ENCODE measurements at regions of chr12 and their contacts with region 1.

Region 1: DNA sequence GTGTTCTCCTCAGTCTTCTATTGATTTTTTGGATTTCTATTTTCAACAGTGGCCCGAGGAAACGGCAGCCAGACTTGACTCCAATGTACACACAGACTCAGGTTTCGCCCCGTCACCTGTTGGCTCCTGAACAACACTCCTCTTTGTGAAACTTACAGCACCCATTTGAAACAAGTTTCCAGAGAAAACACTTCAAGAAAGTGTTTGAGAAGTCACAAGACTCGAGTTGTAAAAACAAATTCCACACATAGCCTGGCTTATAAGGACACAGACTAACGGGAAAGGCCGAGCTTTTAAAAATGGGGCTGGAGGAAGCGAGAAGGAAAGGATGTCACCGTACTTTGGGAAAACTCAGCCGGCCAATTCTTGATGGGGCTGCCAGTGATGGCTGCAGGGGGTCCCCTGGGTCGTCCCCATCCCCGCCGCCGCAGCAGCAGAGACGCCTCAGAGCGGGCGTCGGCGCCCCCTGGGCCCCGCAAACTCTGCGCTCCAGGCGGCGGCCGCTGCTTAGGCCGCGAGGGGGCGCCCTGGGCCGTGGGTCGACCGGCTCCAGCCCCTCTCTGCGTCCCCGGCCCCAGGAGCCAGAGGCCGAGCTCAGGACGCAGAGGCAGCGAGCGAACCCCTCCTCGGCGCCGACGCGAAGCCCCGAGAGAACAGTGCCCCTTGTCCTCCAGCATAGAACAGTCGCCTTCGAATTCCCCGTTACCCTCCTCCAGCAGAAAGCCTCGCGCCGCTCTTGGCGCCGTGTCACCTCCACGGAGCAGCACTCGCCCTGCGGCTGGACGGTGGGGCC is 106.9 kb downstream of the PRICKLE1 start:
- DNase-seq: peak; percentile 81 to 94
- ATAC-seq: peak; percentile 94
- H3K4me3 ChIP-seq: peak overlapping the region; percentile 77 to 95
- H3K27ac ChIP-seq: peak overlapping the region in 1 of 2 donors; percentile 77
- H3K4me1 ChIP-seq: no peaks in the 10 kb centered on the region
- H3K27me3 ChIP-seq: no peaks in the 10 kb centered on the region

Region 2: DNA sequence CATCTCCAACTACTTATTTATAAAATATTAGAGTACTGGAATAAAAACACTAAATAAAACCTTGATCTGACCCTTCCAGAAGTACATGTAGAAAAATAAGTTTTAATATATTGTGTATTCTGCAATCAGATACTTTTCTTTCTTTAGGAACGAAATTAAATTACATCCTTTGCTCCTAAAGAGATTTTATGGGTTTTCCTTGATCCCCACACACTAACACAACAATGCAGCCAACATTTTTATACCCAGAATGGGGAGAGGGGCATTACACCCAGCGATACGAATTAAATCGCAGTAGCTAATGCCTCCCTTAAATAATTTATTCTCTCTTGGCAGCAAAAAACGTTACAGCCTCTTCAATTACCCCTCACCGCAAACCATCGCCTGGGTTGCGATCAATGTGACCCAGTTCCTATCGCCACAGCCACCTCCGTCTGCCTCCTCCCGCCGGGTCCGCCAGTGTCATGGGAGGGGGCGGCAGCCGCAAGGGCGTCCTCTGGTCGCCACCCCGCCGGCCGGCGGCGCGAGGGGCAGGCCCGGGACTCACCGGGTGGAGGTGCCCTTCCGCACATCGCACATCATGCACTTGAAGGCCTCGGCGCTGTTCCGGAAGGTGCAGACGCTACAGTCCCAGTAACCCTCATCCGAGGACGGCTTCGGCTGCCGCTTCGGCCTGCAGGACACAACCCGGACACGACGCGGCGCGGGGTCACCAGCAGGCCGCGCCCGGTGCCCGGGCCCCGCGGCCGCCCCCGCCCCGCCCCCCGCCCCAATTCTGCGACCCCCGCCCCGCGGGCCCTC is 245.4 kb before region 1 on chr12:
- intact Hi-C with region 1: loop called in 1 of 2 experiments (anchors 5 kb)
- DNase-seq: peak; percentile 86 to 90
- ATAC-seq: peak; percentile 73
- H3K4me3 ChIP-seq: peak overlapping the region; percentile 99 to 100
- H3K27ac ChIP-seq: peak overlapping the region; percentile 9 to 99
- H3K4me1 ChIP-seq: peaks cover 0 to 5% of the 10 kb centered on the region in 2 donors
- H3K27me3 ChIP-seq: no peaks in the 10 kb centered on the region

Region 3: GRCh38 chr12:42446761-42447160 is 35.9 kb before region 1 on chr12:
- intact Hi-C with region 1: no loop called
- DNase-seq: no peak
- ATAC-seq: no peak
- H3K4me3 ChIP-seq: no peak overlapping the region
- H3K27ac ChIP-seq: no peak overlapping the region
- H3K4me1 ChIP-seq: peaks cover 2 to 4% of the 10 kb centered on the region in 2 donors
- H3K27me3 ChIP-seq: no peaks in the 10 kb centered on the region

Region 4: GRCh38 chr12:42568952-42569915 is 86.6 kb after region 1 on chr12:
- intact Hi-C with region 1: loop called (anchors 2 kb)
- DNase-seq: no peak
- ATAC-seq: peak; percentile 57
- H3K4me3 ChIP-seq: no peak overlapping the region
- H3K27ac ChIP-seq: no peak overlapping the region
- H3K4me1 ChIP-seq: peaks cover 0 to 2% of the 10 kb centered on the region in 2 donors
- H3K27me3 ChIP-seq: no peaks in the 10 kb centered on the region

Region 5: DNA sequence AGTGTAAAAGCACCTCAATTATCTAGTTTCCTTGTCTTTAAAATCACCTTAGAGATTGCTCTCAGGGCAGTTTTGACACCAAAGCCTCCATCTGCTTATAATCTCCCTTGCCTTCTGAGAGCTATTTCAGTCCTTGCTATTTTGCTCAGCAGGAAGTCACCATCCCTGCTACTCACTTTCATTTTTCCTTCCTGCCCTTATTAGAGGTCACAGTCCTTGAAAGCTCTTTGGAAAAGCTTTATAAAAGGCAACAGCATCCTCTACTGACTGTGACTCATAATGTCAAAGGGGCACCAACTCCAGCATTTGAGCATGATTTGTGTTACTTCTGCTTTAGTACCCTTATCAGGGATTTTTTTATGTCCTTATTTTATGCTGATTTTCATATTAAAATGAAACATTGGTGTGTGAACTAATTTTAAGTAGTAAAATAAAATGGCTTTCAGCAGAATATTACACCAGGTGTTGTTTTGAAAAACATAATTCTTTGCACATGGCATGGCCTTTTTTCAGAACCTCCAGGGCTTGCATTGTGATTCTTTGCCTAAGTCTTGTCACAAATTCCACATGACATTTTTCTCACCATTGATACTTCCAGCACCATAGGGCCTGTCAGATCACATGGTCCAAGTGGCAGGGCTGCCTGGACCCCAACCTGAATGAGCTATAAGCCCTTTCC is 856.3 kb after region 1 on chr12:
- intact Hi-C with region 1: loop called in 1 of 2 experiments (anchors 5 kb)
- DNase-seq: no peak
- ATAC-seq: peak; percentile 80
- H3K4me3 ChIP-seq: no peak overlapping the region
- H3K27ac ChIP-seq: no peak overlapping the region
- H3K4me1 ChIP-seq: no peaks in the 10 kb centered on the region
- H3K27me3 ChIP-seq: no peaks in the 10 kb centered on the region

Measured in aorta (tissue), 5 donors.